A673 (cell line): ENCODE measurements at regions of chr5 and their contacts with region 1.

Region 1: DNA sequence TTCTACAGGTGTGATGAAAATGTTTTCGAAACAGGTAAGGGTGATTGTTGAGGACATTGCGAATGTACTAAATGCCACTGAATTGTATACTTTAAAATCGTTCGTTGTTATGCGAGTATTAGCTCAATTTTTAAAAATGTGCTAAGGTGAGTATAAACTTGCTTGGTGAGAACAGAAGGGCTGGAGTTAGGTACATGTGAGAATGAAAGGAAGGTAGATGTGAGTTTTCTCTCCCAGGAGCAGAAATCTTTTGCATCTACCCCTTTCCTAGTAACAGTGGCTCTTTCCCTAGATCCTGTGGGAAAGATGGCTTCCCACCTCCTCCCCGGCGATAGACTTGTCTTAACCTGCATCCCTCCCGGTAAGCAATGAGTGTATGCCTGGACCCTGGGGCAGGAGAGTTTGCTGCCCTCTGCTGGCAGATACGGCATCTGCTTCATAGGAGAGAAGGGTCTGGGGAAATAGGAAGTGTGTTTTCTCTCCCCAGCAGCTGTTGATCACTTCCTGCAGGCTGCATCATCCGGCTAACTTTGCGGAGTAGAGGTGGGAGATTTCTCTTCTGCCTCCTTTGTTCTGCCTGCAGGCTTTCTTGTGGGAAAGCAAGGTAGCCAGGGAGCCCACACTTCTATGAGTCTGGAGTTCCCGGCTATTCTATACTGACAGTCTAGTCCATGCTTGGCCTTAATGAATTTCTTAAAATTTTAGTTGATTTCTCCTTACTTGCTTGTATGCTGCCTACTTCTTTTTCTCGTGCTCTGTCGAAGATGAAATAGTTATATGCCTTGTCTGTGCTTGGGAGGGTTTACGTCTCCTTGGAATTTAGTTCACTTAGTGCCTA is 373.3 kb upstream of the SEMA6A start:
- DNase-seq: peak; percentile 78
- H3K4me3 ChIP-seq: no peak overlapping the region
- H3K27ac ChIP-seq: no peak overlapping the region
- H3K4me1 ChIP-seq: no peaks in the 10 kb centered on the region
- H3K27me3 ChIP-seq: no peaks in the 10 kb centered on the region
- CTCF ChIP-seq: peak; percentile 77

Region 2: GRCh38 chr5:116137544-116138378 is 810.1 kb before region 1 on chr5:
- CTCF ChIA-PET with region 1: no interaction called
- POLR2A ChIA-PET with region 1: no interaction called
- intact Hi-C with region 1: loop called (anchors 5 kb)
- DNase-seq: peak; percentile 70
- H3K4me3 ChIP-seq: no peak overlapping the region
- H3K27ac ChIP-seq: no peak overlapping the region
- H3K4me1 ChIP-seq: no peaks in the 10 kb centered on the region
- H3K27me3 ChIP-seq: no peaks in the 10 kb centered on the region
- CTCF ChIP-seq: peak; percentile 79

Region 3: DNA sequence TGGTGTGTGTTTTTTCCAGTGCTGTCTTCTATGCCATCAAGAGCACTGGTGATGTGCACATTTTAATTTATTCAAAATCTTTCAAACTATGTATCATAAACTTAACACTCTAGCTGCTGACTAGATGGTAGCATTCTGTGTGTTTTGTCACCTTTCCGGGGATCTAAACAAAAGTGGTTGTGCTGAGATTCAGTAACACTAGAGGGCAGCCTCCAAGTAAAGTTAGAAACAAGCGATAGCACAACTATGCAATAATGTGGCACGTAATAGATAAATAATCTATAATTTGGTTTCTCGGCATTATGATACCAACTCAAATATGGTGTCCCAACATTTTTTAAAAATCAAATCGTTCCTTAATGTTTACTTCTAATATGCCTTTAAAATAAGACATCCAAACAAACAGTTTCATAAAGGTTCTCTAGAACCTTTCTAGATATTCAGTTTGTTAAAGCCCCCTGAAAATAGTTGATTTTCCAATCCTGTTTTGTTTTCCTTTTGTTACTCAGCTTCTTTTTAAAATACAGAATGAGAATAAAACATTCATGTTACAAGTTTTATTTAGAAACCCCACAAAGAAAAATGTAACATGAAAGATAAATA is 390.1 kb before region 1 on chr5:
- CTCF ChIA-PET with region 1: no interaction called
- POLR2A ChIA-PET with region 1: no interaction called
- intact Hi-C with region 1: loop called (anchors 2 kb)
- DNase-seq: peak; percentile 52
- H3K4me3 ChIP-seq: no peak overlapping the region
- H3K27ac ChIP-seq: no peak overlapping the region
- H3K4me1 ChIP-seq: no peaks in the 10 kb centered on the region
- H3K27me3 ChIP-seq: no peaks in the 10 kb centered on the region
- CTCF ChIP-seq: peak; percentile 77

Region 4: GRCh38 chr5:117041926-117042595 is 94.2 kb after region 1 on chr5:
- CTCF ChIA-PET with region 1: no interaction called
- POLR2A ChIA-PET with region 1: no interaction called
- intact Hi-C with region 1: no loop called
- DNase-seq: peak; percentile 33
- H3K4me3 ChIP-seq: no peak overlapping the region
- H3K27ac ChIP-seq: no peak overlapping the region
- H3K4me1 ChIP-seq: no peaks in the 10 kb centered on the region
- H3K27me3 ChIP-seq: no peaks in the 10 kb centered on the region
- CTCF ChIP-seq: no peak